ENCODE measurements at regions of chr2 and their contacts with region 1.

Region 1: GRCh38 chr2:197851451-197851850 is 47.1 kb downstream of the PLCL1 start:
- DNase-seq: no peak
- H3K4me3 ChIP-seq: no peak overlapping the region
- H3K27ac ChIP-seq: no peak overlapping the region
- H3K4me1 ChIP-seq: no peaks in the 10 kb centered on the region
- H3K27me3 ChIP-seq: no peaks in the 10 kb centered on the region
- CTCF ChIP-seq: peak in 2 of 3 experiments; percentile 48 to 64; a peak in 3 of 4 replicates
- EP300 ChIP-seq: no peak
- POLR2A ChIP-seq: no peak
- RAD21 ChIP-seq: peak; percentile 79 to 83

Region 2: DNA sequence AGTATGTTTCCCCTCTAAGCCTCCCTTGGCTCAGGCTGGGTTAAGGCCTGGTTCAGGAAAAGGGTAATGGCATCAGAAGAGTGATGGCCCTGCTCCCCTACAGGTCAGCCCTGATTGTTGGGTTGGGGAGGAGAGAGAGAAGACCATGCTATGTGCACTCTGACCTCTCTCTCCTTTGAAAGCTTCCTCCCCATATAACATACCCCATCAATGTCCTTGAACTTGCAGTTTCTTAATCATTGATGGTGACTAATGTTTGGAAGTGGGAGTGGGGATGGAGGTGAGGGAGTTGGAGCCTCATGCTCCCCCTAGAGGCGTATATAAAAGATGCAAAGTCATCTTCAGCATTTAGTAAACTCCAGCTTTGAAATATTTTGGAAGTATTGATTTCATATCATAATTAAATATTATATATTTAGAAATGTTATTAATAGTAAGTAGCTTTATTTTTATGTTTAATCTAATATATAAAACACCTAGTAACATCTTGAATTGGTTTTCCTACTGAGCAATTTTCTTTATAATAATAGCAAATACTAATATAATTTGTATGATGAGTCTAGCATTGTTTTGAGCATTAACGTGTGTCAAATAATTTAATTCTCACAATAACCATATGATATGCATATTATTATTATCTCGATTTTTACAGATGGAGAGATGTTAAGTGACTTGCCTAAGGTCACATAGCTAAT is 38.2 kb before region 1 on chr2:
- CTCF ChIA-PET with region 1: interaction called, 15 read pairs
- POLR2A ChIA-PET with region 1: no interaction called
- DNase-seq: no peak
- H3K4me3 ChIP-seq: no peak overlapping the region
- H3K27ac ChIP-seq: no peak overlapping the region
- H3K4me1 ChIP-seq: no peaks in the 10 kb centered on the region
- H3K27me3 ChIP-seq: no peaks in the 10 kb centered on the region
- CTCF ChIP-seq: peak; percentile 38 to 53 (median 45); a peak in 3 of 4 replicates
- EP300 ChIP-seq: no peak
- POLR2A ChIP-seq: no peak
- RAD21 ChIP-seq: peak; percentile 21 to 44; a peak in 3 of 4 replicates

Region 3: GRCh38 chr2:197873293-197873701 is 21.8 kb after region 1 on chr2:
- CTCF ChIA-PET with region 1: interaction called, 10 read pairs
- POLR2A ChIA-PET with region 1: no interaction called
- DNase-seq: peak in 1 of 2 experiments; percentile 15
- H3K4me3 ChIP-seq: no peak overlapping the region
- H3K27ac ChIP-seq: no peak overlapping the region
- H3K4me1 ChIP-seq: peaks cover 3 to 5% (median 3%) of the 10 kb centered on the region in 4 experiments
- H3K27me3 ChIP-seq: no peaks in the 10 kb centered on the region
- CTCF ChIP-seq: peak in 1 of 3 experiments; percentile 21; a peak in 1 of 4 replicates
- EP300 ChIP-seq: no peak
- POLR2A ChIP-seq: no peak
- RAD21 ChIP-seq: no peak; a peak in 1 of 4 replicates

Region 4: GRCh38 chr2:198053776-198054698 is 202.6 kb after region 1 on chr2:
- CTCF ChIA-PET with region 1: interaction called, 16 read pairs
- POLR2A ChIA-PET with region 1: no interaction called
- DNase-seq: peak; percentile 13 to 52
- H3K4me3 ChIP-seq: no peak overlapping the region
- H3K27ac ChIP-seq: no peak overlapping the region
- H3K4me1 ChIP-seq: no peaks in the 10 kb centered on the region
- H3K27me3 ChIP-seq: no peaks in the 10 kb centered on the region
- CTCF ChIP-seq: peak; percentile 55 to 67 (median 60)
- EP300 ChIP-seq: no peak
- POLR2A ChIP-seq: no peak
- RAD21 ChIP-seq: peak; percentile 67 to 69

Region 5: GRCh38 chr2:198296665-198297308 is 445.3 kb after region 1 on chr2:
- CTCF ChIA-PET with region 1: interaction called, 28 read pairs
- POLR2A ChIA-PET with region 1: no interaction called
- DNase-seq: peak; percentile 53 to 70
- H3K4me3 ChIP-seq: peak overlapping the region in 1 of 4 experiments; percentile 44; a peak in 1 of 8 replicates
- H3K27ac ChIP-seq: no peak overlapping the region
- H3K4me1 ChIP-seq: no peaks in the 10 kb centered on the region
- H3K27me3 ChIP-seq: no peaks in the 10 kb centered on the region
- CTCF ChIP-seq: peak; percentile 39 to 82 (median 69)
- EP300 ChIP-seq: no peak
- POLR2A ChIP-seq: no peak
- RAD21 ChIP-seq: peak; percentile 94 to 97